ENCODE measurements at regions of chr3 and their contacts with region 1.

Region 1: GRCh38 chr3:189276481-189277219 is 104.9 kb downstream of the TPRG1 start:
- DNase-seq: peak in 1 of 2 donors; percentile 12
- ATAC-seq: peak in 6 of 8 donors; percentile 50 to 80 (median 72)
- H3K4me3 ChIP-seq: no peak overlapping the region
- H3K27ac ChIP-seq: no peak overlapping the region
- H3K4me1 ChIP-seq: peaks cover 0 to 19% (median 0%) of the 10 kb centered on the region in 9 donors
- H3K27me3 ChIP-seq: peaks cover 0 to 4% (median 0%) of the 10 kb centered on the region in 7 donors
- CTCF ChIP-seq: no peak

Region 2: GRCh38 chr3:189392969-189393368 is 116.3 kb after region 1 on chr3:
- intact Hi-C with region 1: no loop called
- DNase-seq: no peak
- ATAC-seq: no peak
- H3K4me3 ChIP-seq: no peak overlapping the region
- H3K27ac ChIP-seq: no peak overlapping the region
- H3K4me1 ChIP-seq: peaks cover 0 to 13% (median 0%) of the 10 kb centered on the region in 9 donors
- H3K27me3 ChIP-seq: no peaks in the 10 kb centered on the region
- CTCF ChIP-seq: no peak

Region 3: DNA sequence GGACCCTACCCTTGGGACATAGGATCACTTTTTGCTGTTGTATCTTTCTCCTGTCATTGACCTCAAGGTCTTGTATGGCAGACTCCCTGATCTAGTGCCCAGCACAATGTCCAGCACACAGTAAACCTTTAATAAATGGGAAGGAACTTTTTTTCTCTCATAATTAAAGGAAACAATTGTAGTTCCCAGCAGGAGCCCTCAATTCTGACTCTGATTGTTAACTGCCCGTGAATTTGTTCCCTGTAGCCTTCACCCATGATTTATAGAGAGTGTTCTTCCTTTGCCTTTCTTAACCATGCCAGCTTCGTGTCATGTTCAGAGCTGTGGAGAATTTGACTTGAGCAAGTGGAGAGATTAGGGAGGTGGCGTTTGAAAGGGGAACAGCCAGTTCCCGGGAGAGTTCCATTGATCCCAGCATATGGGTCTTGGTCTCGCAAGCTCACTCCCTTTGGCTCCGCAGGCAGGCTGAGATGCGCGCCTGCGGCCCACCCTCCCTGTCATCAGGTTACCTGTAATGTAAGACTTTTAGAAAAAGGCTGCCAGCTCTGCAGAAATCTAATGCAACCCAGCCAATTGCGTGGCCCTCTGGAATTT is 537.1 kb after region 1 on chr3:
- intact Hi-C with region 1: no loop called
- DNase-seq: no peak
- ATAC-seq: peak in 2 of 8 donors; percentile 49 to 79
- H3K4me3 ChIP-seq: no peak overlapping the region
- H3K27ac ChIP-seq: no peak overlapping the region
- H3K4me1 ChIP-seq: no peaks in the 10 kb centered on the region
- H3K27me3 ChIP-seq: no peaks in the 10 kb centered on the region
- CTCF ChIP-seq: no peak

Region 4: GRCh38 chr3:189941679-189942078 is 665.0 kb after region 1 on chr3:
- intact Hi-C with region 1: loop called in 7 of 10 experiments (anchors 5 kb)
- DNase-seq: no peak
- ATAC-seq: no peak
- H3K4me3 ChIP-seq: no peak overlapping the region
- H3K27ac ChIP-seq: no peak overlapping the region
- H3K4me1 ChIP-seq: no peaks in the 10 kb centered on the region
- H3K27me3 ChIP-seq: peaks cover 0 to 13% (median 0%) of the 10 kb centered on the region in 7 donors
- CTCF ChIP-seq: no peak

Measured in heart right ventricle (tissue), 16 donors.